ENCODE measurements at regions of chr19 and their contacts with region 1.

Region 1: GRCh38 chr19:19053508-19054314 is 10.1 kb upstream of the SLC25A42 start:
- DNase-seq: peak; percentile 67
- H3K4me3 ChIP-seq: no peak overlapping the region
- H3K27ac ChIP-seq: no peak overlapping the region
- H3K4me1 ChIP-seq: no peaks in the 10 kb centered on the region
- H3K27me3 ChIP-seq: no peaks in the 10 kb centered on the region
- CTCF ChIP-seq: peak; percentile 81

Region 2: DNA sequence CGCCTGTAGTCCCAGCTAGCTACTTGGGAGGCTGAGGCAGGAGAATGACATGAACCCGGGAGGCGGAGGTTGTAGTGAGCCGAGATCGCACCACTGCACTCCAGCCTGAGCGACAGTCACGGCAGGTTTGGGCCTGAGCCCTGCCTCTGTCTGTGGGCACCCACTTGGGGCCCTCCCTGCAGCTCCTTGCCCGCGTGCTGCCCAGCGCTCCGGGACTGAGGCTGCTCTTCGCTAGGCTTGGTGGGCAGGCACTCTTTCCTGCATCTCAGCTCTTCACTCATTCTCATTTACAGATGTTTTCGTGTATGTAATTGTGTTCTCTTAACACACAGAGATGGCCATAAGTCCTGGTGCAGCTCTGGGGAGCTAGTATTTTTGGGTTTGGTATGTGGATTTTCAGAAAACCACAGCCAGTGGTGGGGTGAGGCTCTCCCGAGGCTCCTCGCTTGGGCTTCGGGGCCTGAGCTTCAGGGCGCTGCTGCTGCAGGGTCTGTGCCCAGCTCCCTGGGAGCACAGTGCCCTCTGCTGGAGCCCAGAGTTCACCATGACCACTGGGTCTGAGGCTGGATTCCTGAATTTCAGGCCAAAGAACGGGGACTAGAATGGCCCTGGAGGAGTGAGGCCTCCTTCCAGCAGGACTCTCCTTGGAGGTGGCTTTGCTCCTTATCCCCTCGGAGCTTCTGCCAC is 206.7 kb before region 1 on chr19:
- CTCF ChIA-PET with region 1: no interaction called
- POLR2A ChIA-PET with region 1: no interaction called
- intact Hi-C with region 1: no loop called
- DNase-seq: peak; percentile 82
- H3K4me3 ChIP-seq: no peak overlapping the region
- H3K27ac ChIP-seq: peak overlapping the region; percentile 68
- H3K4me1 ChIP-seq: peaks cover 29% of the 10 kb centered on the region
- H3K27me3 ChIP-seq: no peaks in the 10 kb centered on the region
- CTCF ChIP-seq: peak; percentile 87

Region 3: DNA sequence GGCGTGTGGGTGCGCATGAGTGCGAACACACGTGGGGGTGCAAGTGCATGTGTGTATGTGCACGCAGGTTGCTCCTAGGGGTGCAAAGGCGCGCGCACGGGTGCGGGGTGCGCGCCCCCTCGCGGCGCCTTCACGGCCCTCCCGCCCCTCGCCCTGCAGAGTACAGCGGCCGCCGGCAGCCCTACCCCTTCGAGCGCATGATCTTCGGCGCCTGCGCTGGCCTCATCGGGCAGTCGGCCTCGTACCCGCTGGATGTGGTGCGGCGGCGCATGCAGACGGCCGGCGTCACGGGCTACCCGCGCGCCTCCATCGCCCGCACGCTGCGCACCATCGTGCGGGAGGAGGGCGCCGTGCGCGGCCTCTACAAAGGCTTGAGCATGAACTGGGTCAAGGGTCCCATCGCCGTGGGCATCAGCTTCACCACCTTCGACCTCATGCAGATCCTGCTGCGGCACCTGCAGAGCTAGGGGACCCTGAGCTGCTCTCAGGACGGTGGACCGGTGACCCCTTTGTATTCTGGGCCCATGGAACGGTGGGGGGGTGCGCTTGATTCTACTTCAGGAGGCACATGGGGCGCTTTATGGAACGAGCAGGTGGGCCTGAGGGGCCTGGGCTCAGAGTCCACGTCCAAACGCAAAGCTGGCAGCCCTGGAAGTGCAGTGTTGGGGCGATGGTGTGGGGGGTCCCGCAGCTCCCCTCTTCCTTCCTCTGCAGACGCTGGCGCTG is 56.9 kb after region 1 on chr19:
- CTCF ChIA-PET with region 1: no interaction called
- POLR2A ChIA-PET with region 1: no interaction called
- intact Hi-C with region 1: loop called (anchors 5 kb)
- DNase-seq: peak; percentile 45
- H3K4me3 ChIP-seq: no peak overlapping the region
- H3K27ac ChIP-seq: no peak overlapping the region
- H3K4me1 ChIP-seq: peaks cover 7% of the 10 kb centered on the region
- H3K27me3 ChIP-seq: no peaks in the 10 kb centered on the region
- CTCF ChIP-seq: peak; percentile 65

Region 4: GRCh38 chr19:19138169-19138981 is 84.7 kb after region 1 on chr19 and contains the start of gene TMEM161A:
- CTCF ChIA-PET with region 1: no interaction called
- POLR2A ChIA-PET with region 1: no interaction called
- intact Hi-C with region 1: loop called (anchors 1 kb)
- DNase-seq: peak; percentile 99
- H3K4me3 ChIP-seq: peak within 1 kb of the TSS; percentile 72
- H3K27ac ChIP-seq: peak within 1 kb of the TSS; percentile 88
- H3K4me1 ChIP-seq: no peaks in the 10 kb centered on the region
- H3K27me3 ChIP-seq: no peaks in the 10 kb centered on the region
- CTCF ChIP-seq: no peak
- total RNA-seq, gene TMEM161A: 34.4 and 42.8 TPM in 2 replicates

Region 5: DNA sequence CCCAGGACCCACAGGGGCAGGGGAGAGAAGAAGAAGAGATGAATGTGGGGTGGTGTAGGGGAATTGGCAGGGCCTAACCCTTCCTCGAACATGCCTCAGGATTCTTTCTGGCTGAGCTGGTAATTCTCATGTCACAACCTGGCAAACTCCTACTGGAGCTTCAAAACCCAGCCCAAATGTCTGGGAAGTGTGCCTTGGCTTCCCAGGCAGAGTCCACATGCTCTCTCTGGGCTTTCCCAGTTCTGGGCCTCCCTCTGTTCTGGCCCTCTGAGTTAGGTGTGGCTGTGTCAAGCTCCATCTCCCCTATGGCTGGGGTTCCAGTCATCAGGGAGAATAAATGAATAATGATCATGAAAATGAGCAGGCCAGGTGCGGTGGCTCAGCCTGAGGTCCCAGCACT is 95.7 kb after region 1 on chr19:
- CTCF ChIA-PET with region 1: no interaction called
- POLR2A ChIA-PET with region 1: no interaction called
- intact Hi-C with region 1: no loop called
- DNase-seq: no peak
- H3K4me3 ChIP-seq: no peak overlapping the region
- H3K27ac ChIP-seq: no peak overlapping the region
- H3K4me1 ChIP-seq: no peaks in the 10 kb centered on the region
- H3K27me3 ChIP-seq: no peaks in the 10 kb centered on the region
- CTCF ChIP-seq: no peak